Naive thymus-derived CD4-positive, alpha-beta T cell (primary cell): ENCODE measurements at regions of chr2 and their contacts with region 1.

Region 1: DNA sequence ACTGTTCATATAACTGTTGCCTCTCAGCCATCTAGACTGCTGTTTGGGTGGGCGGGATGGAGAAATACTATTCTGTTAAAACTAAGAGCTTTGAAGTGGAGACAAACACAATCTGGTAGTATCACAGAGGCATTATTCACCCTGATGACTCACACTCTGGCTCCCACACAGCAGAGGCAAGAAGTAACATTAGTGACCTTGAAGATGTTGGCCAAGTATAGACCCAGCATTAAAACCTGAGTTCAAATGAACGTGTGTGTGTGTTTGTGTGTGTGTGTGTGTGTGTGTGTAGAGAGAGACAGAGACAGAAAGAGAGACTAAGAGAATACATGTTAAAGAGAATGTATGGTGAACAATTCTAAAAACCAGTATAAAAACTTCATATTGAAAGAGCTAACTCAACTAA is 22.5 kb upstream of the ACVR1 start:
- DNase-seq: peak in 2 of 9 donors; percentile 54 to 60
- ATAC-seq: peak; percentile 63
- H3K4me3 ChIP-seq: peak overlapping the region; percentile 26
- H3K4me3 Mint-ChIP-seq: peak overlapping the region; percentile 74 to 93 (median 86)
- H3K27ac ChIP-seq: peak overlapping the region; percentile 78
- H3K27ac Mint-ChIP-seq: peak overlapping the region; percentile 94 to 100 (median 98)
- H3K4me1 ChIP-seq: peaks cover 44 to 59% of the 10 kb centered on the region in 2 donors
- H3K4me1 Mint-ChIP-seq: peaks cover 48 to 80% (median 72%) of the 10 kb centered on the region in 7 donors
- H3K27me3 ChIP-seq: no peaks in the 10 kb centered on the region
- H3K27me3 Mint-ChIP-seq: no peaks in the 10 kb centered on the region

Region 2: GRCh38 chr2:156341452-156342253 is 1556.9 kb before region 1 on chr2:
- CTCF ChIA-PET with region 1: no interaction called
- POLR2A ChIA-PET with region 1: no interaction called
- intact Hi-C with region 1: loop called (anchors 2 to 5 kb)
- DNase-seq: peak; percentile 66 to 91 (median 85)
- ATAC-seq: peak; percentile 81
- H3K4me3 ChIP-seq: peak overlapping the region; percentile 67
- H3K4me3 Mint-ChIP-seq: peak overlapping the region; percentile 91 to 98 (median 96)
- H3K27ac ChIP-seq: peak overlapping the region; percentile 100
- H3K27ac Mint-ChIP-seq: peak overlapping the region; percentile 94 to 100 (median 99)
- H3K4me1 ChIP-seq: peaks cover 18 to 20% of the 10 kb centered on the region in 2 donors
- H3K4me1 Mint-ChIP-seq: peaks cover 6 to 51% (median 45%) of the 10 kb centered on the region in 7 donors
- H3K27me3 ChIP-seq: no peaks in the 10 kb centered on the region
- H3K27me3 Mint-ChIP-seq: no peaks in the 10 kb centered on the region

Region 3: GRCh38 chr2:157336137-157337010 is 562.2 kb before region 1 on chr2:
- CTCF ChIA-PET with region 1: no interaction called
- POLR2A ChIA-PET with region 1: no interaction called
- intact Hi-C with region 1: loop called in 1 of 2 experiments (anchors 10 kb)
- DNase-seq: peak in 7 of 9 donors; percentile 19 to 59 (median 53)
- ATAC-seq: peak; percentile 52
- H3K4me3 ChIP-seq: peak overlapping the region; percentile 5
- H3K4me3 Mint-ChIP-seq: peak overlapping the region; percentile 5 to 86 (median 70)
- H3K27ac ChIP-seq: peak overlapping the region; percentile 15
- H3K27ac Mint-ChIP-seq: peak overlapping the region; percentile 15 to 92 (median 81)
- H3K4me1 ChIP-seq: peaks cover 23 to 58% of the 10 kb centered on the region in 2 donors
- H3K4me1 Mint-ChIP-seq: peaks cover 28 to 90% (median 83%) of the 10 kb centered on the region in 7 donors
- H3K27me3 ChIP-seq: no peaks in the 10 kb centered on the region
- H3K27me3 Mint-ChIP-seq: no peaks in the 10 kb centered on the region

Region 4: DNA sequence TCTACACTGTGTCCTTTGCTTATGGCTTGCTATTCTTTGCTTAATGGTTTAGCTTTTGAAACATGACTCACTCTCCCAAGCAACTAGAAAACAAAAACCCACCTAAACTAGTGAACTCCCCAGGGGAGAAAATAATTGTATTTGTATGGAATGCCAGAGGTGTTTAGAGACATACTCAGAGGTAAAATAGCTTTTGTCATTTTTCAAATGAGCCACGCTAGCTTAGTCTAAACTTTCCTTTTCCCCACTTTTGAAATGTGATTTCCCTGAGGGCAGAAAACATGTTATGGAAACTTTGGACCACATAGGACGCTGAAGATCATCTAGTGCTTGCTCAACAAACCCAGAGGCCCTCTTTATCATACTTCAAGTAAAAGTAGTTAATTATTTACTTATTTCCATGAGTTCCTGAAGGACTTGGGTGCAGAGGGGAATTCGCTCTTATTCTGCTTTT is 438.2 kb before region 1 on chr2:
- CTCF ChIA-PET with region 1: no interaction called
- POLR2A ChIA-PET with region 1: no interaction called
- intact Hi-C with region 1: loop called in 1 of 2 experiments (anchors 5 kb)
- DNase-seq: no peak
- ATAC-seq: no peak
- H3K4me3 ChIP-seq: no peak overlapping the region
- H3K4me3 Mint-ChIP-seq: peak overlapping the region in 8 of 10 donors; percentile 16 to 71 (median 48)
- H3K27ac ChIP-seq: no peak overlapping the region
- H3K27ac Mint-ChIP-seq: peak overlapping the region in 8 of 9 donors; percentile 7 to 98 (median 80)
- H3K4me1 ChIP-seq: peaks cover 15 to 59% of the 10 kb centered on the region in 2 donors
- H3K4me1 Mint-ChIP-seq: peaks cover 38 to 99% (median 94%) of the 10 kb centered on the region in 7 donors
- H3K27me3 ChIP-seq: no peaks in the 10 kb centered on the region
- H3K27me3 Mint-ChIP-seq: no peaks in the 10 kb centered on the region

Region 5: DNA sequence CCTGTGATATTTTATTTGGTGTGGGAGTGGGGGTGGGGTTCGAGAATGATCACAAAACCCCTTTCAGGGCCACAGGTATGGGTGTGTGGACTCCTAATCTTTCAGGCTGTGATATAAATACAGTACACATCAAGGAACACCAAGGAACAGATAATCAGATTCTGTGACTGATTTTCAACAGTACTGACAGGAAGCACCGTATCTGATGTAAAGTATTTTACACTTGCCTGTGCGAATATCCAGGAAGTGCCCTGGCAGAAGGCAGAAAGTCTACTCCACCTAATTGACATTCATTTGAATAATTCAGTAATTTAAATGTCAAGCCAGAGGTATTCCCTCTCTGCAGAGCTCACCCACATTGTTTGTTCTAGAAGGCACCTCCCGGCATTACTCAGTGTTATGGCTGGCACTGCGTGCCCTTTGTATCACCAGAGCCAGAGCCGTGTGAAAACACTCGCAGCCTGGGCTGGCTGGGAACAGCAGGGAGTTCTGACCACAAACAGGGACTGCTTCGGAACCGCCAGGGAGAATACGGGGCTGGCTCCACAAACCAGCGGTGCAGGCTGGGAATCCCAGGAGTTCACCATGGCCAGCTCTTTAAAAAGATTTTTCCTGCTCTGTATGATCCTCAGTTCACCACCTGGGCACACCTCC is 114.3 kb before region 1 on chr2:
- CTCF ChIA-PET with region 1: no interaction called
- POLR2A ChIA-PET with region 1: no interaction called
- intact Hi-C with region 1: loop called (anchors 2 kb)
- DNase-seq: peak in 6 of 9 donors; percentile 3 to 29 (median 14)
- ATAC-seq: peak; percentile 55
- H3K4me3 ChIP-seq: no peak overlapping the region
- H3K4me3 Mint-ChIP-seq: peak overlapping the region in 9 of 10 donors; percentile 22 to 59 (median 38)
- H3K27ac ChIP-seq: no peak overlapping the region
- H3K27ac Mint-ChIP-seq: peak overlapping the region; percentile 25 to 90 (median 73)
- H3K4me1 ChIP-seq: peaks cover 0 to 12% of the 10 kb centered on the region in 2 donors
- H3K4me1 Mint-ChIP-seq: peaks cover 13 to 51% (median 37%) of the 10 kb centered on the region in 7 donors
- H3K27me3 ChIP-seq: no peaks in the 10 kb centered on the region
- H3K27me3 Mint-ChIP-seq: no peaks in the 10 kb centered on the region

Region 6: GRCh38 chr2:157876066-157876787 is 22.4 kb before region 1 on chr2 and contains the start of gene ACVR1:
- CTCF ChIA-PET with region 1: interaction called, 12 read pairs
- POLR2A ChIA-PET with region 1: interaction called, 50 read pairs
- intact Hi-C with region 1: loop called (anchors 1 kb)
- DNase-seq: peak; percentile 68 to 85 (median 75)
- ATAC-seq: peak; percentile 86
- H3K4me3 ChIP-seq: peak within 1 kb of the TSS; percentile 60
- H3K4me3 Mint-ChIP-seq: peak within 1 kb of the TSS; percentile 90 to 98 (median 96)
- H3K27ac ChIP-seq: peak within 1 kb of the TSS; percentile 77
- H3K27ac Mint-ChIP-seq: peak within 1 kb of the TSS; percentile 83 to 96 (median 90)
- H3K4me1 ChIP-seq: peaks cover 12 to 19% of the 10 kb centered on the region in 2 donors
- H3K4me1 Mint-ChIP-seq: peaks cover 24 to 63% (median 53%) of the 10 kb centered on the region in 7 donors
- H3K27me3 ChIP-seq: no peaks in the 10 kb centered on the region
- H3K27me3 Mint-ChIP-seq: no peaks in the 10 kb centered on the region
- total RNA-seq, gene ACVR1: 13.3 to 42.0 (median 20.6) TPM